ENCODE measurements at regions of chr15 and their contacts with region 1.

Region 1: DNA sequence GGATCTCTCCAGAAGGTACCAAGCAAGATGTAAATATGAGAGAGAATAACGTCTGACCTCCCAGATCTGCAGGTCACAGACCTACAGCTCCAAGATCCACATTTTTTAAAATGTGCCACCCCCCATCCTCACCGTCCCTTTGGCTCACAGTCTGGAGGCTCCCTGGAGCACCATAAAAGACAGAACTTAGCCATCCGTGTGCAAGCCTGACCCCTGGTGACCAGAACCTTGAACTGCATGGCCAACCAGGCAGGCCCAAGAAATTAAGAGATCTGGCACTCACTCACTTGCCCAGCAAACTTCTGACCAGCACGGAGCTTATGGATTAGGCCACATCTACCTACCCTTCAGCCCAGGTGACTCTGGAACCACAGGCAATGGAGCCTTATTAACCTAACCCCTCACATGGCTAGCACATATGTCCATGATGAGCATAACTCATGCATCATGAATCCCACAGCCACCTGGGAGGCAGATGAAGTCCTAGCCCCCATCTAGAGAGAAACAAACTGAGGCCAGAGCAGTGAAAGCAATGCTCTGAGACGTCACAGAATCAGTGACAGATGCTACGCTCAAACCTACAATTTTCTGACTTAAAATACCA is 275.3 kb downstream of the UACA start:
- H3K4me3 ChIP-seq: no peak overlapping the region
- H3K27ac ChIP-seq: no peak overlapping the region
- H3K4me1 ChIP-seq: peaks cover 17% of the 10 kb centered on the region
- CTCF ChIP-seq: peak; percentile 88

Region 2: GRCh38 chr15:69576035-69576526 is 912.0 kb before region 1 on chr15:
- CTCF ChIA-PET with region 1: interaction called, 11 read pairs
- POLR2A ChIA-PET with region 1: no interaction called
- H3K4me3 ChIP-seq: no peak overlapping the region
- H3K27ac ChIP-seq: no peak overlapping the region
- H3K4me1 ChIP-seq: 0 out of 2 replicates have a peak, but pooled peaks cover 3% of the 10 kb centered on the region
- CTCF ChIP-seq: peak; percentile 80

Region 3: GRCh38 chr15:70375006-70375431 is 113.1 kb before region 1 on chr15:
- CTCF ChIA-PET with region 1: no interaction called
- POLR2A ChIA-PET with region 1: no interaction called
- H3K4me3 ChIP-seq: no peak overlapping the region
- H3K27ac ChIP-seq: no peak overlapping the region
- H3K4me1 ChIP-seq: peaks cover 2% of the 10 kb centered on the region; the same call in 1 of the 2 replicates
- CTCF ChIP-seq: no peak

Region 4: GRCh38 chr15:70385072-70385535 is 103.0 kb before region 1 on chr15:
- CTCF ChIA-PET with region 1: no interaction called
- POLR2A ChIA-PET with region 1: no interaction called
- H3K4me3 ChIP-seq: no peak overlapping the region
- H3K27ac ChIP-seq: no peak overlapping the region
- H3K4me1 ChIP-seq: no peaks in the 10 kb centered on the region
- CTCF ChIP-seq: no peak

Region 5: GRCh38 chr15:70466895-70467529 is 21.1 kb before region 1 on chr15:
- CTCF ChIA-PET with region 1: interaction called, 53 read pairs
- POLR2A ChIA-PET with region 1: interaction called, 3 read pairs
- H3K4me3 ChIP-seq: no peak overlapping the region
- H3K27ac ChIP-seq: no peak overlapping the region
- H3K4me1 ChIP-seq: no peaks in the 10 kb centered on the region
- CTCF ChIP-seq: peak; percentile 90

Region 6: GRCh38 chr15:70504299-70504951 is 16.3 kb after region 1 on chr15:
- CTCF ChIA-PET with region 1: interaction called, 181 read pairs
- POLR2A ChIA-PET with region 1: interaction called, 17 read pairs
- H3K4me3 ChIP-seq: no peak overlapping the region
- H3K27ac ChIP-seq: peak overlapping the region; percentile 78
- H3K4me1 ChIP-seq: peaks cover 54% of the 10 kb centered on the region
- CTCF ChIP-seq: no peak

Region 7: GRCh38 chr15:70521576-70522322 is 33.6 kb after region 1 on chr15:
- CTCF ChIA-PET with region 1: no interaction called
- POLR2A ChIA-PET with region 1: no interaction called
- H3K4me3 ChIP-seq: no peak overlapping the region
- H3K27ac ChIP-seq: no peak overlapping the region
- H3K4me1 ChIP-seq: peaks cover 17% of the 10 kb centered on the region
- CTCF ChIP-seq: no peak

Region 8: GRCh38 chr15:70569091-70569621 is 81.1 kb after region 1 on chr15:
- CTCF ChIA-PET with region 1: interaction called, 10 read pairs
- POLR2A ChIA-PET with region 1: no interaction called
- H3K4me3 ChIP-seq: no peak overlapping the region
- H3K27ac ChIP-seq: peak overlapping the region; percentile 20; the same call in 1 of the 2 replicates
- H3K4me1 ChIP-seq: peaks cover 15% of the 10 kb centered on the region
- CTCF ChIP-seq: peak; percentile 94